ENCODE measurements at regions of chrX and their contacts with region 1.

Region 1: GRCh38 chrX:56563231-56564161 is at the start of gene UBQLN2:
- DNase-seq: peak; percentile 57 to 78 (median 74)
- ATAC-seq: peak; percentile 89
- H3K4me3 ChIP-seq: peak within 1 kb of the TSS; percentile 98
- H3K4me3 Mint-ChIP-seq: peak within 1 kb of the TSS; percentile 88 to 98 (median 94)
- H3K27ac ChIP-seq: peak within 1 kb of the TSS; percentile 85
- H3K27ac Mint-ChIP-seq: peak within 1 kb of the TSS; percentile 93 to 100 (median 98)
- H3K4me1 ChIP-seq: peaks cover 4 to 5% of the 10 kb centered on the region in 2 donors
- H3K4me1 Mint-ChIP-seq: peaks cover 5 to 20% (median 15%) of the 10 kb centered on the region in 7 donors
- H3K27me3 ChIP-seq: no peaks in the 10 kb centered on the region
- H3K27me3 Mint-ChIP-seq: no peaks in the 10 kb centered on the region
- total RNA-seq, gene UBQLN2: 48.8 to 76.5 (median 56.8) TPM

Region 2: DNA sequence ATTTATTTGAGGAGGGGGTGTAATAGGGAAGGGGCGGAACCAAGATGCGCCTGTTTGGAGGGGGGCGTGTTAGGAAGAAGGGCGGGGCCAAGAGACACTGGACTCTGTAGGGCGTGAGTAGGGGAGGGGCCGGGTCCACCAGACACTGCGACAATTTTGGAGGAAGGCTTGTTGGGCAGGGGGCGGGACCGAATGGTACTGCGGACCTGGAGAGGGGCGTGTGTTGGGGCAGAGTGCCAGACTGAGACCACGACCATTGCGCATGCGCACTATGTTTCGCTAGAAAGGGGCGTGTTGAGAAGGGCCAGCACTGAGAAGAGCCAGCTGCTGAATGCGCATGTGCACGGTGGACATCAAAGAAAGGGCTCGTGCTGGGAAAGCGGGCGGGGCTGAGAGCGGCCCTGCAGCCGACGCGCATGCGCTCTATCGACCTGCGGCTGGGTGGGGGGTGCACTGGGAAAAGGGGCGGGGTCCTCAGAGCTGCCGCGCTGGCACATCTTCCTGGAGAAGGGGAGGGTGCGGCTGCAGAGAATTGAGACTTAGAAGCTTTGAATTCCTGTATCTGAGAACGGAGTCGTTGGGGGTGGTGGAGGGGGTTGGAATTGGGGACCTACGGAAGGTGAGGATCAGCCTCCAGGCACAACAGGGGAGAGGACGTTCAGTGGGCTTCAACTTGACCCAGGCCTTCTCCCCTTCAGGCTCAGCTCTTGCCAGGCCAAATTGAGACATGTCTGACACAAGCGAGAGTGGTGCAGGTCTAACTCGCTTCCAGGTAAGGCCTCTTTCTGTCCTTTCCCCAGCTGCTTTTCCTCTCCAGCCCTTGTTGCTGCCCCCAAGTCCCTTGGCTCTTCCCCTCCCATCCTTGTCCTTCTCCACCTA is 1754.7 kb before region 1 on chrX:
- CTCF ChIA-PET with region 1: no interaction called
- POLR2A ChIA-PET with region 1: no interaction called
- intact Hi-C with region 1: loop called in 1 of 2 experiments (anchors 5 kb)
- DNase-seq: peak; percentile 63 to 90 (median 84)
- ATAC-seq: peak; percentile 84
- H3K4me3 ChIP-seq: peak overlapping the region; percentile 93
- H3K4me3 Mint-ChIP-seq: peak overlapping the region; percentile 90 to 99 (median 96)
- H3K27ac ChIP-seq: peak overlapping the region; percentile 89
- H3K27ac Mint-ChIP-seq: peak overlapping the region; percentile 93 to 98 (median 96)
- H3K4me1 ChIP-seq: no peaks in the 10 kb centered on the region
- H3K4me1 Mint-ChIP-seq: peaks cover 5 to 28% (median 19%) of the 10 kb centered on the region in 7 donors
- H3K27me3 ChIP-seq: no peaks in the 10 kb centered on the region
- H3K27me3 Mint-ChIP-seq: peaks cover 0 to 25% (median 0%) of the 10 kb centered on the region in 5 donors

Region 3: GRCh38 chrX:56281789-56282188 is 281.7 kb before region 1 on chrX:
- CTCF ChIA-PET with region 1: interaction called, 5 read pairs
- POLR2A ChIA-PET with region 1: interaction called, 7 read pairs
- intact Hi-C with region 1: loop called (anchors 1 to 2 kb)
- DNase-seq: peak in 7 of 9 donors; percentile 15 to 60 (median 46)
- ATAC-seq: peak; percentile 55
- H3K4me3 ChIP-seq: no peak overlapping the region
- H3K4me3 Mint-ChIP-seq: peak overlapping the region in 3 of 10 donors; percentile 3 to 41 (median 14)
- H3K27ac ChIP-seq: no peak overlapping the region
- H3K27ac Mint-ChIP-seq: peak overlapping the region in 2 of 9 donors; percentile 40 to 70
- H3K4me1 ChIP-seq: peaks cover 0 to 3% of the 10 kb centered on the region in 2 donors
- H3K4me1 Mint-ChIP-seq: peaks cover 2 to 14% (median 10%) of the 10 kb centered on the region in 7 donors
- H3K27me3 ChIP-seq: no peaks in the 10 kb centered on the region
- H3K27me3 Mint-ChIP-seq: no peaks in the 10 kb centered on the region

Region 4: GRCh38 chrX:56366901-56367300 is 196.6 kb before region 1 on chrX:
- CTCF ChIA-PET with region 1: interaction called, 4 read pairs
- POLR2A ChIA-PET with region 1: no interaction called
- intact Hi-C with region 1: loop called (anchors 1 to 5 kb)
- DNase-seq: no peak
- ATAC-seq: no peak
- H3K4me3 ChIP-seq: no peak overlapping the region
- H3K4me3 Mint-ChIP-seq: peak overlapping the region in 3 of 10 donors; percentile 21 to 53 (median 23)
- H3K27ac ChIP-seq: no peak overlapping the region
- H3K27ac Mint-ChIP-seq: peak overlapping the region in 7 of 9 donors; percentile 19 to 96 (median 47)
- H3K4me1 ChIP-seq: peaks cover 4 to 52% of the 10 kb centered on the region in 2 donors
- H3K4me1 Mint-ChIP-seq: peaks cover 19 to 64% (median 59%) of the 10 kb centered on the region in 7 donors
- H3K27me3 ChIP-seq: no peaks in the 10 kb centered on the region
- H3K27me3 Mint-ChIP-seq: no peaks in the 10 kb centered on the region

Region 5: GRCh38 chrX:56833626-56834025 is 270.1 kb after region 1 on chrX:
- CTCF ChIA-PET with region 1: no interaction called
- POLR2A ChIA-PET with region 1: no interaction called
- intact Hi-C with region 1: no loop called
- DNase-seq: no peak
- ATAC-seq: no peak
- H3K4me3 ChIP-seq: no peak overlapping the region
- H3K4me3 Mint-ChIP-seq: no peak overlapping the region
- H3K27ac ChIP-seq: no peak overlapping the region
- H3K27ac Mint-ChIP-seq: no peak overlapping the region
- H3K4me1 ChIP-seq: no peaks in the 10 kb centered on the region
- H3K4me1 Mint-ChIP-seq: peaks cover 0 to 2% (median 0%) of the 10 kb centered on the region in 7 donors
- H3K27me3 ChIP-seq: no peaks in the 10 kb centered on the region
- H3K27me3 Mint-ChIP-seq: peaks cover 0 to under 1% (median 0%) of the 10 kb centered on the region in 5 donors

Region 6: DNA sequence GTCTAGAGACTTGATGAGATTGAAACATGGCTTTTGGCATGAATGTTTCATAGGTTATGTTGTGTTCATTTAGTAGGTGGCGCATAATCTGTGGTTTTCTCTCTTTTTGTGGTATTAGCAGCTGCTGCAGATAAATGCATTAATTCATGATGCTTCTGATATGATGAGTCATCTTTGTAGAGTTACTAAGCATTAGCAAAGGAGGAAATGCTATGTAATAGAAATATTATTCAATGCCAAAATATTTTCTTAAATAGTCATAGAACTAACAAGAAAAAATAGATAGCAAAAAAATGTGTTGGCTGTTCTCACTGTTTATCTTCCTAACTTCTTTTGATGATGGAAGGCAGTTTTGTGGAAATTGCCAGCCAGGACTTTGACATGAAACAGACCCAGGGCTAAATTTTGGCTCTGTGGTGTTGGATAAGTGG is 1031.9 kb after region 1 on chrX:
- CTCF ChIA-PET with region 1: no interaction called
- POLR2A ChIA-PET with region 1: no interaction called
- intact Hi-C with region 1: loop called in 1 of 2 experiments (anchors 10 kb)
- DNase-seq: no peak
- ATAC-seq: no peak
- H3K4me3 ChIP-seq: no peak overlapping the region
- H3K4me3 Mint-ChIP-seq: peak overlapping the region; percentile 6 to 87 (median 68)
- H3K27ac ChIP-seq: no peak overlapping the region
- H3K27ac Mint-ChIP-seq: peak overlapping the region in 5 of 9 donors; percentile 0 to 79 (median 50)
- H3K4me1 ChIP-seq: peaks cover 0 to 18% of the 10 kb centered on the region in 2 donors
- H3K4me1 Mint-ChIP-seq: peaks cover 8 to 54% (median 39%) of the 10 kb centered on the region in 7 donors
- H3K27me3 ChIP-seq: no peaks in the 10 kb centered on the region
- H3K27me3 Mint-ChIP-seq: no peaks in the 10 kb centered on the region